ENCODE measurements at regions of chr6 and their contacts with region 1.

Region 1: GRCh38 chr6:119110601-119111548 is 32.4 kb upstream of the FAM184A start:
- H3K4me3 ChIP-seq: no peak overlapping the region
- H3K27ac ChIP-seq: no peak overlapping the region
- H3K4me1 ChIP-seq: no peaks in the 10 kb centered on the region
- CTCF ChIP-seq: peak; percentile 58

Region 2: DNA sequence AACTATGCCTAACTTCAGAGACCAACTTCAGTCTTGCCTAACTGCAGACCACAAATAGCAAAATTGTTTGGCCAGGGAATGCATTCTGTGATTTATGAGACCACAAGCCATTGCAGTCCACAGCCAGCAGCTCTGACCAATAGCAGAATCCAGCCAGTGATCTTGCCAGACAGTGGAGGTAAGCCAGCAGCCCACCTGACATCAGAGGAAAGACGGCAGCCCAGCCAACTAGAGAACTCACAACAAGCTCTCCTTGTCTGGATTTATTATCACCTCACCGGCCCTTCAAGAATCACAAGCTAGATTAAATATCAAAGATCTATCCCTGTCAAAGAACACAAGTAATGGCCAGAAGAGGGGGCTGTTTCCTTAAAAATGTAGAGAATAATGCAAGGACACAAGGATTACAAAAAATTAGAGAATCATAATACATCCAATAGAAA is 1270.3 kb before region 1 on chr6:
- CTCF ChIA-PET with region 1: interaction called, 12 read pairs
- POLR2A ChIA-PET with region 1: no interaction called
- H3K4me3 ChIP-seq: no peak overlapping the region
- H3K27ac ChIP-seq: no peak overlapping the region
- H3K4me1 ChIP-seq: no peaks in the 10 kb centered on the region
- CTCF ChIP-seq: 0 out of 2 replicates have a peak, but pooled peaks have one; percentile 39

Region 3: GRCh38 chr6:118146584-118146983 is 964.3 kb before region 1 on chr6:
- CTCF ChIA-PET with region 1: no interaction called
- POLR2A ChIA-PET with region 1: no interaction called
- H3K4me3 ChIP-seq: no peak overlapping the region
- H3K27ac ChIP-seq: no peak overlapping the region
- H3K4me1 ChIP-seq: no peaks in the 10 kb centered on the region
- CTCF ChIP-seq: no peak

Region 4: DNA sequence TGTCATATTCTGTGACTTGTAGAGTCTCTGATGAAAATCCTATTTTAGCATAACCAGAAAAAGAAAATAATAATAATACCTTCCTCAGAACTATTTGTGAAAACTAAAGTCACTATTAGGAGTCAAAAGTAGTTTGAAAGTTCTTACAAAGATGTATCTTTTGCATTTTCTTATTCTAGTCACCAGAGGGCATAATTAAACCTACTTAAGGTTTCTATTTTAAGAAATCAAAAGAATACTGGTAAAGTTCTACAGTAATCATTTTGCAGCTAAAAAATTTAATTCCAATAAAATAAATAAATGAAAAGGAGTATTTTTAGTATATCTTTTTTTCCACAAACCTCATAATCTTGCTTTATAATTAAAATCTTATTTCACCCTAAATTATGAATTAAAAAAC is 147.9 kb before region 1 on chr6:
- CTCF ChIA-PET with region 1: interaction called, 100 read pairs
- POLR2A ChIA-PET with region 1: interaction called, 3 read pairs
- H3K4me3 ChIP-seq: no peak overlapping the region
- H3K27ac ChIP-seq: no peak overlapping the region
- H3K4me1 ChIP-seq: no peaks in the 10 kb centered on the region
- CTCF ChIP-seq: no peak

Region 5: DNA sequence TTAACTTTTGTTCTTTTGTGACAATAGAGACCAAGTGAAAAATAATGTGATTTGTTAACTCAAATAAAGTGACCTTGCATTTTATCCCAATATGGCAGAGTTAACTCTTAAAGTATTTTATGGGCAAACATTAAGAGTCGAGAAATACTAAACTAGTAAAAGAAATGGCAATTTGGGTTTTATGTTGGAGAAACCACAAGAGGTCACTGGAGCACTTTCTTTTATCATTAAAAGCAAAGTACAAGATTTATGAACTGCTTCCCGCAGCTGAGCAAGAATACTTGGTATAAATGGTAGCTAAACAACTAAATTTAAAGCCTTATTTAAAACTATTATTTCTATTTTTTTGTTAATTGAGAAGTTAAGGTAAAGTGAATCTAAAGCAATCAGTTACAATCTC is 142.5 kb before region 1 on chr6:
- CTCF ChIA-PET with region 1: interaction called, 100 read pairs
- POLR2A ChIA-PET with region 1: interaction called, 3 read pairs
- H3K4me3 ChIP-seq: no peak overlapping the region
- H3K27ac ChIP-seq: no peak overlapping the region
- H3K4me1 ChIP-seq: no peaks in the 10 kb centered on the region
- CTCF ChIP-seq: no peak

Region 6: GRCh38 chr6:119022796-119023195 is 88.1 kb before region 1 on chr6:
- CTCF ChIA-PET with region 1: no interaction called
- POLR2A ChIA-PET with region 1: no interaction called
- H3K4me3 ChIP-seq: no peak overlapping the region
- H3K27ac ChIP-seq: no peak overlapping the region
- H3K4me1 ChIP-seq: no peaks in the 10 kb centered on the region
- CTCF ChIP-seq: no peak

Region 7: DNA sequence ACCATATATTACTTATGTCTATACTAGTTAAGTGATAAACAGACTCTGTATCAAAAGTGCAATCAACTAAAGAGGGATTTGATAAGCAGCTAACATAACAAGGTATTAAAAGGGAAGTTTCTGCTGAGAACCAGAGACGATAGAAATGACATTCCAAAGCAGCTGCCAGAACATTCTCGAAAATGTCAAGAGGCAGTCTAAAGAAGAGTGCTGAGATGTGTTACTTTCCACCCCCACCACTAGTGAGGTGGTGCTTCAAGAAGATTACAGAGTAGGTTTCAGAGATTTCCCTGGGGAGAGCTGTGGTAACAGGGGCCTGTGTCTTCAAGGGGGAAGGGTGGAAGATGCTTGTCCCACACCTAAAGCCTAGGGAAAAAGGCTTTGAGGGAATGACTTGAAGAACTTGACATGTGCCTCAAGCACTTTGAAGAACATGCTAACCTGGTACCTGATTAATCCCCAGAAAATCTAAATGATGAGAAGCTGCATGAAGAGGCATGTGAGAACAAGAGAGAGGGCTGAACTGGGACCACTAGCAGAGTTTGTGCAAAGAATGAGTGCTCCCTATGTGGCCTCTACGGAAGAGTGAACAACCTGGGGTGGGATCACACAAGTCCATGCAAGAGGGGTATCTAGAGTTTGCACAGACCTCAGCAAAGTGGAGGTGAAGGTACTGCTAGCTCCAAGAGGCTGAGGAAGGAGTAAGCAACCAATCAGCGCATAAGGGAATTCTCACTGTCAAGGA is 37.4 kb before region 1 on chr6:
- CTCF ChIA-PET with region 1: interaction called, 14 read pairs
- POLR2A ChIA-PET with region 1: no interaction called
- H3K4me3 ChIP-seq: no peak overlapping the region
- H3K27ac ChIP-seq: no peak overlapping the region
- H3K4me1 ChIP-seq: peaks cover 17% of the 10 kb centered on the region
- CTCF ChIP-seq: no peak

Region 8: GRCh38 chr6:119078376-119079282 is 32.2 kb before region 1 on chr6 and contains the start of gene FAM184A:
- CTCF ChIA-PET with region 1: interaction called, 14 read pairs
- POLR2A ChIA-PET with region 1: interaction called, 3 read pairs
- H3K4me3 ChIP-seq: peak within 1 kb of the TSS; percentile 61
- H3K27ac ChIP-seq: peak within 1 kb of the TSS; percentile 63; the same call in 1 of the 2 replicates
- H3K4me1 ChIP-seq: peaks cover 17% of the 10 kb centered on the region
- CTCF ChIP-seq: peak; percentile 95

Region 9: DNA sequence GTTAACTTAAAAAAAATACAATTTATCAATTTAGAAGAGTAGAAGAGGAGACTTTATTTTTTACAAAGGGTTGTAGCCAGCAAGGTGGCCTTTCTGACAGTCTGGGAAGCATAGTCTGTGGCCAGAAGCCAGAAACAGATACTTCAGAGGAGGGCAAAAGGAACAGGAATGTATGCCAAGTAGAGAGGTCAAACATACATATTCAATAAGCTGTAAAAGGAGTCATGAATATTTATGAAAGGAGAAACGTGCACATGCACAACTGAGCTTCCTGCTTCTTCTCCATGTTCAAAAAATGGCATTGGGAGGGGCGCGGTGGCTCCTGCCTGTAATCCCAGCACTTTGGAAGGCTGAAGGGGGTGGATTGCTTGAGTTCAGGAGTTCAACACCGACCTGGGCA is 11.5 kb after region 1 on chr6:
- CTCF ChIA-PET with region 1: interaction called, 17 read pairs
- POLR2A ChIA-PET with region 1: no interaction called
- H3K4me3 ChIP-seq: no peak overlapping the region
- H3K27ac ChIP-seq: no peak overlapping the region
- H3K4me1 ChIP-seq: no peaks in the 10 kb centered on the region
- CTCF ChIP-seq: no peak

Region 10: DNA sequence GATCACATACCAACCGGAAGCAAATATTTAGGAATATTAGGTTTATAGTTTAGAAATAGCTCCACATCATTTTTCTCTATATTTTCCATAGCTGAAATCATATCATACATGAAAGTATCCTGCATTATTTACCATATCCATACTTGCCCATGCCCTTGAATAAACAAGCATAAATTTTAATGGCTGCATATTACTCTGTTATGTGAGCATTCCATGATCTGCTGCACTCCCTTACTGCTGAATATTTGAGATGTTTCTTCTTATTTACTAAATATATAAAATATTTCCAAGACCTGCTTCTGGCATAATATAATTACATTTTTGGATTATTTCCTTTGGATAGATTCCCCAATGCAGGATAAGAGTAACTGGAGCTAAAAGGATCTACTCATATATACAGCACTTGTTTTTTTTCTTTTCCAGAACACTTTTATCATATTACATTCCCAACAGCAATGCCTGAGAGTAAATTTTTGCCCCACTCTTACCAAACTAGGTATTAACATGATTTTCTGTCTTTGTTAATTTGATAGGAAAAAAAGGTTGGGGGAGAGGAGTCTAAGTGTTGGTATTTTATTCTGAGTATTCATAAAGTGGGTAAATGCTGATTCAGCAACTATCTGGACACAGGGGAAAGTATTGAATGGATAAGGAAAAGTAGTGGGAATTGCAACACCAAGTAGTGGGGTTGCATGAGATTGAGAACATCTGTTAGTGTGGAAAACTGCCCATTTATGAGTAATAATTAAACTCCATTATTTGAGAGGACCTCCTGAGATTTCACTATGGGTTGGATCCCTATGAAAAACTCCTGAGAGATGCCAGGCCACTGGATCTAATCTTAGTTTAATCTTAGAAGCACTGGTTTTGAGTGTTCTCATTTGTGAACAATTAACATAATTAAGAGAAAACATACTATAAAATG is 162.7 kb after region 1 on chr6:
- CTCF ChIA-PET with region 1: no interaction called
- POLR2A ChIA-PET with region 1: no interaction called
- H3K4me3 ChIP-seq: no peak overlapping the region
- H3K27ac ChIP-seq: no peak overlapping the region
- H3K4me1 ChIP-seq: no peaks in the 10 kb centered on the region
- CTCF ChIP-seq: no peak

Region 11: DNA sequence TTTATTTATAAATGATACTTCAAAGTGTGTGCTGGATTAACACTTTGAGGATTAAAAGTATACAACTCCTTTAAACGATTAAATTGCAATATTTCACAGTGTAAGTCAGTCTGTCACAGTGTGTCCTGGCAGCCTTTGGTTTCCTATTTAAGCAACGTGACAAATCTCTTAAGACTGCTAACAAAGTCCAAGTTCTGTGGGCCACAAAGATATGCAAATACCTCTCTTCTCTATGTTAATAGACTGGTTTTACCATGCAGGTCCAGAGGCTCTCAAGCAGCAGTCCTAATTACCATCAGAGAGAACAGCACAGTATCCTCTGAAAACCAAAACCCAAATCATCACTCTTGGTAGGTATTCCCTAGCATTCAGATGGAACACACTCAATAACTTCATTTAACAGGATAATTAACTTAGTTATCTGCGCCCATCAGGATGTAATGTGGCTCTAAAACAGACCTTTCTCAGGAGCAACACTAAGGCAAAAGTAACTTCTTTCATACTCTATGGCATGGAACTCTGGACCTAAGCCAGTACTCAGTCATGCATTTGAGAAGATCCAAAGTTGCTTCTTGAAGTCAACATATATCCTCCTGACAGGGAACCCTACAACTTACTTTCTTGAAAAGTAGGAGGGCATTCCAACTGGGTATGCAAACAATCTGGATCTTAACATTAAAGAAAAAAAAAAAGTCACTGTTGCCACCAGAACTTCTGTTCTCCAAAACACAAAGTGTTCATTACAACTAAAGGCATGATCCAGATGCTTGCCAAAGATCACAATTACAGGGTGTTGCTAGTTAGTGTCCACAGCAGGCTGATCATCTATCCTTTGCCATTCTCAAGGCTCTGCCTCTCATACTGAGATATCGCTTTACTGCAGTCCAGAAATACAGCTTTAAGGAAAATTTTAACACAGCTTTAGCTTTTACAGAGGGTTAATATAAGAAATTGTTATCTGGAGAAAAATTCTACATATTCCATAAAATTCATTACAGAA is 185.5 kb after region 1 on chr6:
- CTCF ChIA-PET with region 1: no interaction called
- POLR2A ChIA-PET with region 1: no interaction called
- H3K4me3 ChIP-seq: no peak overlapping the region
- H3K27ac ChIP-seq: no peak overlapping the region
- H3K4me1 ChIP-seq: no peaks in the 10 kb centered on the region
- CTCF ChIP-seq: no peak

Measured in HEK293 (cell line).